ENCODE measurements at regions of chr1 and their contacts with region 1.

Region 1: DNA sequence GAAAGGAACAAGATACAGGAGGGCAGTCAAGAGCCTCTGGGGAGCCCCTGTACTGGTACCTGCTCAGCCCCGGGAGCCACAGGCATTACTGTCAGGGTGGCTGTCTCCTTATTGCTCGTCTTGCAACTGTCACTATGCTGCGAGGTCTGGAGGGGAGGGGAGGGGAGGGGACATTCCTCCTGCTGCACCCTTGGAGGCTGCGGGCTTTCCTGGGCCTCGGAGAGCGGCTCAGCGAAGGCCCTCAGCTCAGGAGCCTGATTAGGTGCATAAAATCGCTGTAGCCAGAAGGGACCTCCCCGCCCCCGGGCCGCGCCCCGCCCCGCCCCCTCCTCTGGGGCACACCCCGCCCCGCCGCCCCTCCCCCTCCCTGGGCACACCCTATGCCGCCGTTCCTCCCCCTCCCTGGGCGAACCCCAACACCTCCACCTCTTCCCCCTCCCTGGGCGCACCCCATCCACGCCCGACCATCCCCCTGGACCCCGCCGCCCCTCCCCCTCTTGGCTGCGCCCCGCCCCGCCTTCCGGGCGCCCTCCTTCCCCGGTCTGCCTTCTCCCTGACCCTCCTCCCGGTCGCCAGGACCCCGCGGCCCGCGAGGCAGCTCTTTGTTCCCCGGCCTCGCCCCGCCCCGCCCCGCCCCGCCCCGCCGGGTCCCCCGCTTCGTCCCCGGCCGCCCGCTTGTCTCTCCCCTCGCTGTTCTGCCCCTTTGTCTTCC is 35.5 kb downstream of the CACHD1 start:
- DNase-seq: peak; percentile 2 to 74 (median 50)
- ATAC-seq: peak; percentile 52
- H3K4me3 ChIP-seq: peak overlapping the region; percentile 30 to 48
- H3K4me3 Mint-ChIP-seq: peak overlapping the region; percentile 85
- H3K27ac ChIP-seq: no peak overlapping the region
- H3K27ac Mint-ChIP-seq: peak overlapping the region; percentile 88
- H3K4me1 ChIP-seq: peaks cover 4% of the 10 kb centered on the region
- H3K4me1 Mint-ChIP-seq: peaks cover 34% of the 10 kb centered on the region
- H3K27me3 ChIP-seq: no peaks in the 10 kb centered on the region
- H3K27me3 Mint-ChIP-seq: peaks cover 11% of the 10 kb centered on the region
- CTCF ChIP-seq: no peak

Region 2: DNA sequence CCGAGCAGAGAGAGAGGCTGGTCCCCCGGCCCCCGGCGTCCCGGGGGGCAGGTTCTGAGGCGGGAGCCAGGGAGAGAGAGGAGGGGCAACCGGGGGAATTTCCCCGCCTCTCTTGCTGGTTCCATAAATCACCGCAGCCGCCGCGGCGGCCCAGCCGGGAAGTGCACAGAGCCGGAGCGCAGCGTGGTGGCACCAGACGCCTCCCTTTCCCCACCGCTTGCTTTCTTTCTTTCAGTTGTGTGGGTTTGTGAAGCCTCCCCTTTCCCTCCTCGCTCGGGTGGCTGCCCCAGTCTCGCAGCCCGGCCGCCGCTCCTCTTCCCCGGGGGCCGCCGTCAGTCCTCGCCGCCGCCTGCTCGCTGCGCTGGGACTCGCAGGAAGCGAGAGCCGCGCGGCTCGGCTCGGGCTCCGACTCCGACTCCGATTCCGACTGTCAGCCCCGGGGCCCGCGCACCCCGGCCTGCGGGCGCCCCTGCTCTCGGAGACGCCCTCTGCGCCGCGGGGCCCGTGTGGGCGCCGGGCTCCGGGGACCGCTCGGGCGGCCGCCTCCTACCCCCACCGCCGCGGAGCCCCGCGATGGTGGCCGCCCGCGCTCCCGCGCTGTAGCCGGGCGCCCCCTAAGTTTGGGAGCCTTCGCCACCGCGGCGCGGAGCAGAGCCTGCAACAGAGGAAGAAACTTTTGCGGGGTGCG is 35.3 kb before region 1 on chr1 and contains the start of gene CACHD1:
- CTCF ChIA-PET with region 1: no interaction called
- POLR2A ChIA-PET with region 1: no interaction called
- intact Hi-C with region 1: loop called in 1 of 2 experiments (anchors 5 kb)
- DNase-seq: peak; percentile 7 to 86 (median 70)
- ATAC-seq: peak; percentile 85
- H3K4me3 ChIP-seq: peak within 1 kb of the TSS; percentile 48 to 65
- H3K4me3 Mint-ChIP-seq: peak within 1 kb of the TSS; percentile 91
- H3K27ac ChIP-seq: no peak within 1 kb of the TSS
- H3K27ac Mint-ChIP-seq: no peak within 1 kb of the TSS
- H3K4me1 ChIP-seq: peaks cover 10% of the 10 kb centered on the region
- H3K4me1 Mint-ChIP-seq: peaks cover 23% of the 10 kb centered on the region
- H3K27me3 ChIP-seq: peaks cover 0 to 3% of the 10 kb centered on the region in 2 experiments
- H3K27me3 Mint-ChIP-seq: peaks cover 31% of the 10 kb centered on the region
- CTCF ChIP-seq: no peak
- total RNA-seq, gene CACHD1: 3.4 TPM

Region 3: DNA sequence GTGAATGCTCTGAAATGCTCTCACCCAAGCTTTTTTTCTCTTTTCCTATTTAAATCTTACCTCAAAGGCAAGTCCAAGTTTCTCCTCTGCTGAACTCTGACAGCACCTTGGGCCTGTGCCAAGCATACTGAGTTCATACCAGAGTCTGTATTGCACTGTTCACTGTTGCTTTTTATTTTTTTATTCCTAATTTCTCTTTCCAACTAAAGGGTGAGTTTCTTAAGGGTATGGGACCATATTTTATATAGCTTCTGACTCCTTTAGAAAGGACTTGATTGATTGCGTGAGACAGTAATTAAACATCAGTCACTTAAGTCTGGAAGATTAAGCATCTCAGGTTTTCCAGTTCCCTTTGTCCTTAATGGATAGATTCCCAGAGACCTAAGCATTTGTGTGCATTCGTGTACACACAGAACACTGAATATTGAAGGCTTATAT is 34.4 kb after region 1 on chr1:
- CTCF ChIA-PET with region 1: no interaction called
- POLR2A ChIA-PET with region 1: no interaction called
- intact Hi-C with region 1: loop called (anchors 1 to 5 kb)
- DNase-seq: peak in 1 of 9 experiments; percentile 22
- ATAC-seq: no peak
- H3K4me3 ChIP-seq: no peak overlapping the region
- H3K4me3 Mint-ChIP-seq: peak overlapping the region; percentile 68
- H3K27ac ChIP-seq: no peak overlapping the region
- H3K27ac Mint-ChIP-seq: peak overlapping the region; percentile 92
- H3K4me1 ChIP-seq: peaks cover 53% of the 10 kb centered on the region
- H3K4me1 Mint-ChIP-seq: peaks cover 54% of the 10 kb centered on the region
- H3K27me3 ChIP-seq: no peaks in the 10 kb centered on the region
- H3K27me3 Mint-ChIP-seq: no peaks in the 10 kb centered on the region
- CTCF ChIP-seq: no peak

Region 4: DNA sequence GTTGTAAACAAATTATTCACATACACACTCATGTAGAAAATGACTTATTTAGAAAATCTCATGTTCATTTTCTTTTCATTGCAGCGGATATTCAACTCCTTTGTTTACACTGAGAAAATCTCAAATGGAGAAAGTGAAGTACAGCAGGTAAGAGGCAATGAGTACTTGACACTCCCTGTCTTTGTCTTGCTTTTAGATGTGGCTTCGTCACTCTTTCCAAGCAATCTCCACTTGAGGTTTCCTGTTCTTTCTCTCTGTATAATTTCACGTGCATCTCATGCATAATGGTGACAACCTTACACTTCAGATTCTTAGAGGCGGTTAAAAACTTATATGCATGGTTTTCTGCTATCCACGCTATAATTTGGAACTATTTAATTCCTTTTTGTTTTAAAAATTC is 45.1 kb after region 1 on chr1:
- CTCF ChIA-PET with region 1: no interaction called
- POLR2A ChIA-PET with region 1: interaction called, 3 read pairs
- intact Hi-C with region 1: loop called in 1 of 2 experiments (anchors 2 kb)
- DNase-seq: peak in 3 of 9 experiments; percentile 11 to 63 (median 21)
- ATAC-seq: peak; percentile 94
- H3K4me3 ChIP-seq: no peak overlapping the region
- H3K4me3 Mint-ChIP-seq: peak overlapping the region; percentile 44
- H3K27ac ChIP-seq: no peak overlapping the region
- H3K27ac Mint-ChIP-seq: peak overlapping the region; percentile 58
- H3K4me1 ChIP-seq: peaks cover 28% of the 10 kb centered on the region
- H3K4me1 Mint-ChIP-seq: peaks cover 51% of the 10 kb centered on the region
- H3K27me3 ChIP-seq: no peaks in the 10 kb centered on the region
- H3K27me3 Mint-ChIP-seq: no peaks in the 10 kb centered on the region
- CTCF ChIP-seq: no peak